Gastrocnemius medialis (tissue), 4 donors: ENCODE measurements at regions of chr7 and their contacts with region 1.

Region 1: DNA sequence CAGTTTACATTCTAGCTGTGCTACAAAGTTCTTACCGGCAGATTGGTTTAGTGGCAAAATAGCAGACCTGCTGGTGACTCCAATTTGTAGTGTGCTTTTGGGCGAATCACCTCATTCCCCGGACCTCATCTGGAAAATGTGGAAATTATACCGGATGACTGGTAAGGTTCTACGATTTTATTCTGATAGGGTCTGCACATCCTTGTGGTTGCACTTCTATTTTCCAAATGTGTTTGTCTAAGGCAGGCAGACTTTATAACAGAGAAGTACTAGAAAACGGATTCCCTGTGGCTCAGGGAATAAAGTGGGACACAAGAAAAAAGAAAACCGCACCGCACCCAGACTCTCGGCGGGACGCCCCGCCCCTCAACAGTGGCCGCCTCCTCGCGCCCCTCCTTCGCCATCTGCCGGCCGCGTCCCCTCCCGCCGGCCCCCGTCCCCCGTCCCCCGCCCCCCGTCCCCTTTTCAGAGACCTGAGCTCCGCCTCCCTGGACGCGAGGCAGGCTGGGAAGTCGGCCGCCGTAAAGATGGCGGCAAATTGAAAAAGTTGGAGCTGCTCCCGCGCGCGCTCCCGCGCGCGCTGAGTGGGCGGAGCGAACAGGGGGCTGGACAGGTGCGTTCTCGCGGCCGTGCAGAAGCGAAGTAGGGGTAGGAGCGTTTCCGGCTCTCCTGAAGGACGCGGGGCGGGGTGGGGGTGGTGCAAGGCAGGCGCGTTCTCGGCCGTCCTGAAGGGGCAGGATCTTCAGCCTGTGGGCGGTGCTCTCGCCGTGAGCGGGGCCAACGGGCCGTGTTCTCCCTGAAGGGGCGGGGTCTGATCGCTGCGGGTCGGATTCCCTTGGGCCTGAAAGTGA is 531 bp upstream of the CCM2 start:
- DNase-seq: peak; percentile 99
- ATAC-seq: peak; percentile 93 to 95
- H3K4me3 ChIP-seq: peak overlapping the region; percentile 58 to 71 (median 62)
- H3K27ac ChIP-seq: peak overlapping the region; percentile 85 to 94 (median 92)
- H3K4me1 ChIP-seq: peaks cover 13 to 21% of the 10 kb centered on the region in 2 donors
- H3K27me3 ChIP-seq: no peaks in the 10 kb centered on the region
- CTCF ChIP-seq: peak in 1 of 5 experiments; percentile 22
- POLR2A ChIP-seq: peak; percentile 55 to 63

Region 2: DNA sequence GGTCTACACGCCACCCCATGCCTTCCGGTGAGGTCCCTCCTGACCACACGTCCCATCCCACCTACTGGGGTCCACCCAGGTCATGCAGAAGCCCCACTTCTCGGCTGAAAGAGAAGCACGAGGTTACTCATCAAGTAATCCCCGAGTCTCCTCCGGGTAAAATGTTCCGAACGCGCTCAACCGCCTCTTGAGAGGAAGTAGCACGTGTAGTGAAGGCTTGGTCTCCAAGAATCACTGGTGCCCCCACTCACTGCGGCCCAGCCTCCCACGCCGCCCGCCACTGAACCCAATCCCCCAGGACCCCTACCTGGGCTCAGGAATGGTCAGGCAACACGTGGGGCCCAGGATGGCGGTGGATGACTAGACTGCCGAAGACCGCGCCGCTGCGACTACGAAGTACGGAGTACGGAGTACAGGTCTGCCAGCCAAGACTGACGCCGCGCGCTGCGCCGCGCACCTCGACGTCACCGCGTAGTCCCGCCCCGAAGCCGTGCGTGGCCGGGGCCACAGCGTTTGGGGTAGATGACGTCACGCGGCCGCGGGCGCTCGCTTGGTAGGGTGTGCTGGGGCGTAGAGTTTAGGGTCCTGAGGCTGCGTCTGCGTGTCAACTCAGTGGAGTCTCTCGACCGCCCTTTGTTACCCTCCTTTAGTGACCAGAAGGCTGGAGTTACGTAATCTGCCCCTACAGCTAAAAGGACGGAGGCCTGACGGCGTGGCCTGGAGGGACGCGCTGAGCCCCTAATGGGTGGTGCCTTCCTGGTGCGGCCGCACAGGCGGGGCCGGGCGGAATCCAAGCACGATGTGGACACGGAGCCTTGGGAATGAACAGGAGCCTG is 13.0 kb before region 1 on chr7:
- in situ Hi-C with region 1: no loop called
- intact Hi-C with region 1: loop called (anchors 1 kb)
- DNase-seq: peak; percentile 82 to 90
- ATAC-seq: peak; percentile 96 to 97
- H3K4me3 ChIP-seq: peak overlapping the region; percentile 60 to 77 (median 69)
- H3K27ac ChIP-seq: peak overlapping the region; percentile 92 to 98 (median 94)
- H3K4me1 ChIP-seq: peaks cover 18 to 22% of the 10 kb centered on the region in 2 donors
- H3K27me3 ChIP-seq: no peaks in the 10 kb centered on the region
- CTCF ChIP-seq: no peak
- POLR2A ChIP-seq: peak; percentile 90 to 94

Region 3: GRCh38 chr7:45099891-45100760 is 100.7 kb after region 1 on chr7:
- in situ Hi-C with region 1: loop called in 1 of 4 experiments (anchors 10 kb)
- intact Hi-C with region 1: no loop called
- DNase-seq: no peak
- ATAC-seq: no peak
- H3K4me3 ChIP-seq: no peak overlapping the region
- H3K27ac ChIP-seq: peak overlapping the region in 1 of 4 donors; percentile 16
- H3K4me1 ChIP-seq: no peaks in the 10 kb centered on the region
- H3K27me3 ChIP-seq: no peaks in the 10 kb centered on the region
- CTCF ChIP-seq: no peak
- POLR2A ChIP-seq: no peak

Region 4: DNA sequence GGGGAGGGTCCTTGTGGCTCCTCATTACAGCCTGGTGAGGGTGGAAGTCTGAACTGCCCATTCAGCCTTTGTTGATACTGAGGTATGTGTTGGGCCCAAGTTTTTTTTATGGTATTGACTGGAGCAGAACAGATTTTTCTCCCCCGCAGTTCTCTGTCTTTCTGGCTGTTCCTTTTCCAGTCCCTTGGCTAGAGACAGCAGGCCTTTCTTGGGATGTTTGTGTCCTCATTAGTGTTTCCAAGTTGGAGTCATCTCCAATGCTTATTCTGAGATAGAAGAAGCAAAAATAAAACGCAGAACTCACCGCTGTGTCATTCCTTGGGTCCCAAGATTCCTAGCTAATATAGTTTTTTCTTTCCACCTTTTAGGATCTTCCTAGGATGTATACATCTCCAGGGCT is 351.4 kb after region 1 on chr7:
- in situ Hi-C with region 1: no loop called
- intact Hi-C with region 1: no loop called
- DNase-seq: no peak
- ATAC-seq: no peak
- H3K4me3 ChIP-seq: no peak overlapping the region
- H3K27ac ChIP-seq: no peak overlapping the region
- H3K4me1 ChIP-seq: no peaks in the 10 kb centered on the region
- H3K27me3 ChIP-seq: no peaks in the 10 kb centered on the region
- CTCF ChIP-seq: no peak
- POLR2A ChIP-seq: no peak